ENCODE measurements at regions of chr6 and their contacts with region 1.

Region 1: GRCh38 chr6:27392481-27393022 is 4.0 kb downstream of the ZNF391 start:
- DNase-seq: no peak
- H3K4me3 ChIP-seq: no peak overlapping the region
- H3K27ac ChIP-seq: no peak overlapping the region
- H3K4me1 ChIP-seq: peaks cover 6 to 12% of the 10 kb centered on the region in 2 donors
- H3K27me3 ChIP-seq: no peaks in the 10 kb centered on the region
- CTCF ChIP-seq: no peak
- POLR2A ChIP-seq: no peak

Region 2: DNA sequence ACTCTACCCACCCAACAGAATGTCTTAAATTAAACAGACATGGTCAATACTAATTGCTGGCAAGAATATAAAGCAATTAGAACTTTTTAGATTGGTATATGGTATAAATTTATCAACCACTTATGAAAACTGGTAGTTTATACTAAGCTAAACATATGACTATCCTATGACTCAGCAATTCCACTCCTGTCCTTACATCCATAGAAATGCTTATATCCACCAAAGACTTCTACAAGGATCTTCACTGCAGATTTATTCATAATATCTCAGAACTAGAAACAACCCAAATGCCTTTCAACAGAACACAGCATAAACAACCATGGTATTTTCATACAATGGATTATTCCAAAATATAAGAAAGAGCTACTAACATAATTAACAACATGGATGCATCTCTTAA is 75.8 kb after region 1 on chr6:
- intact Hi-C with region 1: loop called (anchors 10 kb)
- DNase-seq: no peak
- H3K4me3 ChIP-seq: no peak overlapping the region
- H3K27ac ChIP-seq: no peak overlapping the region
- H3K4me1 ChIP-seq: peaks cover 12 to 15% of the 10 kb centered on the region in 2 donors
- H3K27me3 ChIP-seq: no peaks in the 10 kb centered on the region
- CTCF ChIP-seq: no peak
- POLR2A ChIP-seq: no peak

Region 3: GRCh38 chr6:27592481-27593199 is 200.1 kb after region 1 on chr6:
- intact Hi-C with region 1: no loop called
- DNase-seq: no peak
- H3K4me3 ChIP-seq: no peak overlapping the region
- H3K27ac ChIP-seq: no peak overlapping the region
- H3K4me1 ChIP-seq: no peaks in the 10 kb centered on the region
- H3K27me3 ChIP-seq: peaks cover 25% of the 10 kb centered on the region
- CTCF ChIP-seq: no peak
- POLR2A ChIP-seq: no peak

Measured in thyroid gland (tissue), 4 donors.